ENCODE measurements at regions of chr7 and their contacts with region 1.

Region 1: DNA sequence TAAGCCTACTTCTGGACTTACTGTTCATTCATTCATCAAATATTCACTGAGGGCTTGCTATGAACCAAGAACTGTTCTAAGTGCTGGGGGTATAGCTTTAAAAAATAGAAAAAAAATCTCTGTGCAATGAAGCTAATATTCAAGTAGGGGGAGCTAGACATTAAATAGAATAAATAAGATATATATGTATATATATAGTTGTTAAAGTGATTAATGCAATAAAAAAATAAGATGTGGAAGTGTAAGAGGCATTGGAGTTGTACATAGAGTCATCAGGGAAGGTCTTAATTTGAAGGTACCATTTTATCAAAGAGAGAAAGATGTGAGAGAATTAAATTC is 181.2 kb upstream of the AGR3 start:
- DNase-seq: peak in 1 of 9 donors; percentile 2
- ATAC-seq: no peak
- H3K4me3 ChIP-seq: no peak overlapping the region
- H3K4me3 Mint-ChIP-seq: no peak overlapping the region
- H3K27ac ChIP-seq: no peak overlapping the region
- H3K27ac Mint-ChIP-seq: no peak overlapping the region
- H3K4me1 ChIP-seq: no peaks in the 10 kb centered on the region
- H3K4me1 Mint-ChIP-seq: peaks cover 0 to 26% (median 0%) of the 10 kb centered on the region in 7 donors
- H3K27me3 ChIP-seq: no peaks in the 10 kb centered on the region
- H3K27me3 Mint-ChIP-seq: peaks cover 0 to 5% (median 0%) of the 10 kb centered on the region in 5 donors

Region 2: DNA sequence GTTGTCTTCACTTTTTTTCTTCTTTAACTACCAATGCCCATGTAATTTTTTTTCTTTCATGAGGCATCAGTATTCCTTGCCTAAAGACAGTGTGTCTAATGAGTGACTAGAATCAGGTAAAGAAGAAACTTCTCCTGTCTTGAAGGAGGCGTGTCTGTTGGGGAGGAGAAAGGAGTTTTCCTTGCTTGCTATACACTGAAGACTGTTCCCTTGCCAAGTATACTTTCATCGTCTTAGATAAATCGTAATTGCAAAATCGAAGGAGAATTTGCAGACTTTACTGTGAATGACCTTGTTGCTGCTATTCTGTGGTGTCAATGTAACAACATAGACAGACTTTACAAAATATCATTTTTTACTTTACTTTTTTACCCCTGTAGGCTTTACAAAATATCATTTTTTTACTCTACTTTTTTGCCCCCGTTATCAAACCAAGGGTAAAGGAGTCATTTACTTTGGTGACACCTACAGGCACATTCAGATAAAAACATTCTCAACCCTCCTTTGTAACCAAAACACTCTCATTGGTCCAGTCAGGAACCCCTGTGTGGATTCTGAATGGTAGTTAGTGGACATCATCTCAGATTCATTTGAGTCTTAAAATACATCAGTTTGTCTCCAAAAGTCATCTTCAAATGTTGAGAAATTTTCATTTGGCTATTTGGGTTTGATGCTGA is 467.9 kb after region 1 on chr7:
- CTCF ChIA-PET with region 1: no interaction called
- POLR2A ChIA-PET with region 1: no interaction called
- intact Hi-C with region 1: loop called in 1 of 2 experiments (anchors 5 kb)
- DNase-seq: peak in 3 of 9 donors; percentile 1 to 16 (median 7)
- ATAC-seq: no peak
- H3K4me3 ChIP-seq: no peak overlapping the region
- H3K4me3 Mint-ChIP-seq: no peak overlapping the region
- H3K27ac ChIP-seq: no peak overlapping the region
- H3K27ac Mint-ChIP-seq: no peak overlapping the region
- H3K4me1 ChIP-seq: no peaks in the 10 kb centered on the region
- H3K4me1 Mint-ChIP-seq: peaks cover 0 to 10% (median 0%) of the 10 kb centered on the region in 7 donors
- H3K27me3 ChIP-seq: no peaks in the 10 kb centered on the region
- H3K27me3 Mint-ChIP-seq: peaks cover 0 to 18% (median 8%) of the 10 kb centered on the region in 5 donors

Measured in naive thymus-derived CD4-positive, alpha-beta T cell (primary cell).